ENCODE measurements at regions of chr9 and their contacts with region 1.

Region 1: DNA sequence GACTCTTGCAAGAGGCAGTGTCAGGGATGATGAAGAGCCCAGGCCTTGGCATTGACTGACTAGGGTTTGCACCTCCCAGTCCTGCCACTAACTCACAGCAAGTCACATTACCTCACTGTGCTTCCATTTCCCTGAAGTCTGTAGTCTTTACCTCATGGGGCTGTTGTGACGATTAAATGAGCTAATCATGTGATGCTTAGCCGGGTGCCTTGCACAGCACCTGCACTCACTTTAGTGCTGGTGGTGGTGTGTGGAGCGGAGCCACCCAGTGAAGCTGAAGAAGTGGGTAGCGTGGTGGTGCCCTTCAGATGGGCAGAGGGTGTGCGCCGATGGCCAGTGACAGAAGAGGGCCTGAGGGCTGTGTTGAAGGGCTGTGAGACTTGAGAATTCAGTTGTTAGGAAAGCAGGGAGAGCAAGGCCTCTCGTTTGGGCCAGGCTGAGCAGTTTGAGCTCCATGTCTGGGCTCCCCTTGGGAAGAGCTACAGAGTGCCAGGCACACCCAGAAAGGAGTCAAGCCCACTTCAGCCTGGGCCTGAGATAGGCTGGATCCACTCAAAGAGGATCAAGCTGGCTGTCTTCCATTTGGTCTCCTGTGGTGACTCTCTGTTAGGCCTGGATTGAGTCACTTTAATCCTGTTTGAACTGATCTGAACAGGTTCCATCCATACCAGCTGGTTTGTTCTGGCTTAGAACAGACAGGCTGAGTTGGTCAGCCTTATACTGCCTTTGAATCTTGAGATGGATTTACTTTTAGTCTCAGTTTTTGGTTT is 42.5 kb downstream of the RALGPS1 start:
- DNase-seq: no peak

Region 2: DNA sequence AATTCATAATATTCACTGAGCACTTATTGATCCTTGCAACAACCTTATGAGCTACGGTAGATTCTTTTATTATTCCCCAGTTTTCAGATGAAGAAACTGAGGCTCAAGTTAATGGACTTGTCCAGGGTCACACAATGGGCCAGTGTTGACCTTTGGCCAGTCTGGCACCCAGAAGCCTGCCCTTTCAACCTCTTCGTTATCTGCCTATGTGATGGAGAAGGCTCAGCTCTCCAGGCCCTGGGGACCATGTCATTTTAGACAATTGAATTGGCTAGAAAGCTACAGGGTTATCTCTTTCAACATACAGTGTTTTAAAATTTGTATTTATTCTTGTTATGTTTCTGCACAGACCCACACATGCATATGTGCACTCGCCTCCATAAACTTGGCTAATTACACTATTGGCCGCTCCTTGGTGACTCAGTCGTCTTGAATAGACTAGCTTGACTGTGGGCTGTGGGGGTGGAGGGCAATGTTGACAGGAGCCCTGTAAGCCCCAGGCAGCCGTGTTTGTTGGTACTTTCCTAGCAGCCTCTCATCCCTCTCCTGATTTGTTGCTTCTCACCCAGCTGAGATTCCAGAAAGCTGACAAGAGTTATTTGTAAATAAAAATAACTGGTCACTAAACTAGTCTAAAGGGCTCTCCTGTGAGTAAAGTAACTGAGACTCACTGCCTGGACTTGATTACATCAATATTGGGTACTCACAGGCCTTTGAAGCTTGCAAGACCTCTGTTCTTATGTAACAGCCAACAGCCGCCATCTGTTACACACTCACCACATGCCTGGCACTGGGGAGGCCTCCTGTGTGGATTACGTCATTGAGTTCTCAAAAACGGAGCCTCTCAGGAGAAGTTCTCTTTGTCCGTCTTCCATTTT is 173.8 kb after region 1 on chr9:
- intact Hi-C with region 1: loop called (anchors 5 kb)
- DNase-seq: peak; percentile 73